CD4-positive, alpha-beta memory T cell (primary cell): ENCODE measurements at regions of chr17 and their contacts with region 1.

Region 1: DNA sequence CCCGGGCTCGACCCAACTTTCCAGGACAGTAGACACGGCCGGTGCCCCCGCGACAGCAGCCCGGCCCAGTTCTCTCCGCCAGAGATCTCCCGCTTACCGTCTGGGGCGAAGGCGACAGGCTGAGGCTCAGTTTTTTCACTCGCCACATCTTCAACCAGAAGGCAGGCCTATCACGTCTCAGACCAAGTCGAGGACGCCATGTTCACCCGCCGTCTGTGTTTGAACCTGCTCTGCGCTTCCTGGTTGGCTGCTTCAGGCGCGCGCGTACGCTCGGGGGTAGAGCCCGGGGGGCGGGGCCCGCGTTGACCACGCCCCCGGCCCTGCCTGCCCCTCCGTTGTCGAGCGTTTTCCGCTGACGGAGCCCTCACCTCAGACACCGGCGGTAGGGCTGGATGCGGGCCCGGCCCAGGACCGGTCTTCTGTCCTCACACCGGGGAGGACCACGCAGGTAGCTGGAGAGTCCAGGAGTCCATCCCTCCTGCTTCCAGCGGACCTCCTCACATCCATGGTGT is at the start of gene SPAG5:
- DNase-seq: peak; percentile 95 to 96 (median 96)
- H3K4me3 ChIP-seq: peak within 1 kb of the TSS; percentile 74 to 95
- H3K4me3 Mint-ChIP-seq: peak within 1 kb of the TSS; percentile 88 to 99 (median 96)
- H3K27ac ChIP-seq: peak within 1 kb of the TSS; percentile 100
- H3K27ac Mint-ChIP-seq: peak within 1 kb of the TSS; percentile 94 to 99 (median 99)
- H3K4me1 ChIP-seq: peaks cover 7% of the 10 kb centered on the region
- H3K4me1 Mint-ChIP-seq: peaks cover 13 to 27% (median 22%) of the 10 kb centered on the region in 4 donors
- H3K27me3 ChIP-seq: no peaks in the 10 kb centered on the region
- H3K27me3 Mint-ChIP-seq: no peaks in the 10 kb centered on the region
- total RNA-seq, gene SPAG5: 9.2 to 10.2 TPM

Region 2: DNA sequence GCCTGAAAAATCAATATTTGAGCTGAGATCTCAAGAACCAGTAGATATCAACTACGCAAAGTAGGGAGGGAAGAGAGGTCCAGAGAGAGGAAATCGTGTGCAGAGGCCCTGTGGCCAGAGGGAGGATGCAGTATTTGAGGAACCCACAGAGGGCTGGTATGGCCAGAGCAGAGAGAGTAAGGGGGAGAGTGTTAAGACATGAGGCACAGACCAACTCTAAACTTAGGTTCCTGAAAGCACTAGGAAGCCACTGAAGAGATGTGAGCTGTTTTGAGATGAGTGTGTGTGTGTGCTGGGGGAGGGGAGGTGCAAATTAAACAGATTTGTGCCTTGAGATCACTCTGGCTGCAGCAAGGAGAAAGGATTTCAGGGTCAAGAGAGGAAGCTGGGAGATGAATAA is 114.6 kb before region 1 on chr17:
- CTCF ChIA-PET with region 1: no interaction called
- POLR2A ChIA-PET with region 1: no interaction called
- intact Hi-C with region 1: no loop called
- DNase-seq: no peak
- H3K4me3 ChIP-seq: no peak overlapping the region
- H3K4me3 Mint-ChIP-seq: no peak overlapping the region
- H3K27ac ChIP-seq: no peak overlapping the region
- H3K27ac Mint-ChIP-seq: peak overlapping the region in 1 of 7 donors; percentile 4
- H3K4me1 ChIP-seq: no peaks in the 10 kb centered on the region
- H3K4me1 Mint-ChIP-seq: no peaks in the 10 kb centered on the region
- H3K27me3 ChIP-seq: no peaks in the 10 kb centered on the region
- H3K27me3 Mint-ChIP-seq: no peaks in the 10 kb centered on the region

Region 3: DNA sequence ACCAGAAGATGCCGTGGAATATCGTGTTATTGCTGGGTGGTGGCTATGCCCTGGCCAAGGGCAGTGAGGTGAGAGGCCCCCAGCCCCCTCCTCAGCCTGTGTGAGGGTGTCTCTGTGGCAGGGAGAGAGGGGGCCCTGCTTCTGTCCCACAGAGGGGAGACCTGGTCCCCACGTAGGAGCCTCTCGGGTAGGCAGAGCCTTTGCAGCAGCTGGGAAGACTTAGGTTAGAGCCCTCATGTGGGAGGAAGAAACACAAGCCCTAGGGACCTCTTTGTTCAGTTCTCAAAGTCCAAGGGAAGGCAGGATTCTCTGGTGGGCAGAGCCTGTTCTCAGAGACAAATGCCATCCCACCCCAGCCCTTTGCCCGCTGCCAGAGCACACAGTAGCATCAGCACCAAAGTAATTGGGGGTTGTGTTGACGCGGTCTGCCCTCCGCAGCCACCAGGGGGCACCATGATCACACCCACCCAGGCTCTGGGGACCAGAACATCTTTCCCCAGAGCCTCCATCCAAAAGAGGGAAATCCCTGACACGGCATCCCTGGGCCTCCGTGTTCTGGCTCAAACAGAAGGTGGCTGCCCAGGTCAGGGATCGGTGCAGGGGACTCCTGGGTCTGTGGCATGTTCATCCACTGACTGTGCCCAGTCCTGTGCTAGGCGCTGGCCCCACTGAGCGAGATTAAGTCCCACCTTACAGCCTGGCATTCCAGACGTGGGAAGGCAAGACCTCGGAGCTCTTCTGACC is 104.2 kb before region 1 on chr17:
- CTCF ChIA-PET with region 1: no interaction called
- POLR2A ChIA-PET with region 1: no interaction called
- intact Hi-C with region 1: loop called (anchors 1 kb)
- DNase-seq: peak; percentile 68 to 74 (median 71)
- H3K4me3 ChIP-seq: no peak overlapping the region
- H3K4me3 Mint-ChIP-seq: no peak overlapping the region
- H3K27ac ChIP-seq: no peak overlapping the region
- H3K27ac Mint-ChIP-seq: peak overlapping the region in 1 of 7 donors; percentile 46
- H3K4me1 ChIP-seq: no peaks in the 10 kb centered on the region
- H3K4me1 Mint-ChIP-seq: no peaks in the 10 kb centered on the region
- H3K27me3 ChIP-seq: no peaks in the 10 kb centered on the region
- H3K27me3 Mint-ChIP-seq: peaks cover 0 to 6% of the 10 kb centered on the region in 2 donors

Region 4: DNA sequence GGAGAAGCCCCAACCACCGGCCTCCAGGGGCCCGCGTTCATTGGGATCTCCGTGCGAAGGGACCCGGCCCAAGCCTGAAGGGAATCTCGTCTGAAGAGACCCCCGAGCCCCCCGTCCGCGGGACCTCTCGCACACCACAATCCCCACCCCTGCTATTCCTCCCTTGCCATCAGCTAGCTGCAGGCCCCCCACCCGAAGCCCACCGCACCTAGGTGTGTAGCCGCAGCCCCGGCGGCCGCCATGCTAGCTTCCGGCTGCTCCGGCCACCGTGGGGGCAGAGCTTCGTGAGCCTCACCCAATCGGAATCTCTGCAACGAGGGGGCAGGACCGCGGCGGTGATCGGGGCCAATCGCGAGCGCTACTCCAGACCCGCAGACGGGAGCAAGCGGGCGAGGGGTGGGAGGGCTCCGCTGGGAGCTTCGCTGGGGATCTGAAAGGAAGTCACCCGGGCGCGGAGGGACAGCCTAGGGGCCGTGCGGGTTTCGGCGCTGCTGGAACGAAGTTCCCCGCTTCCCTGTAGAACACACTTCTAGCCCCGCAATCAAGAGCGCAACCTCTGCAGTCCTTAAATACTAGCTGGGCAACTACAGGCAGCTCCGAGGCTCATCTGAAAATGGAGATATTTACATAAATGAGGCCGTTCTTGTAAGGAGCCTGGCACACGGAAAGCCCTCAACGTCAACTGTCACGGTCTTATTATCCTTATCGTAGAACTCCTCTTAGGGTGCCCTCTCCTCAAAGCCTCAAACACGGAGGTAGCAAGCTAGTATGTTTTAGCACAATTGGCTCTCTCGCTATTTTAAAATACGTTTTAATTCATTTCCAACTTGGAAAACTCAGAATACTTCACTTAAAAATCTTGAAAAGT is 27.4 kb before region 1 on chr17 and contains the start of gene PIGS:
- CTCF ChIA-PET with region 1: interaction called, 3 read pairs
- POLR2A ChIA-PET with region 1: interaction called, 169 read pairs
- intact Hi-C with region 1: loop called (anchors 1 kb)
- DNase-seq: peak; percentile 84 to 93 (median 87)
- H3K4me3 ChIP-seq: peak within 1 kb of the TSS; percentile 59 to 93
- H3K4me3 Mint-ChIP-seq: peak within 1 kb of the TSS; percentile 96 to 99 (median 97)
- H3K27ac ChIP-seq: peak within 1 kb of the TSS; percentile 79
- H3K27ac Mint-ChIP-seq: peak within 1 kb of the TSS; percentile 80 to 98 (median 97)
- H3K4me1 ChIP-seq: peaks cover 68% of the 10 kb centered on the region
- H3K4me1 Mint-ChIP-seq: peaks cover 41 to 82% (median 57%) of the 10 kb centered on the region in 4 donors
- H3K27me3 ChIP-seq: no peaks in the 10 kb centered on the region
- H3K27me3 Mint-ChIP-seq: no peaks in the 10 kb centered on the region
- total RNA-seq, gene PIGS: 57.9 to 58.2 TPM

Region 5: DNA sequence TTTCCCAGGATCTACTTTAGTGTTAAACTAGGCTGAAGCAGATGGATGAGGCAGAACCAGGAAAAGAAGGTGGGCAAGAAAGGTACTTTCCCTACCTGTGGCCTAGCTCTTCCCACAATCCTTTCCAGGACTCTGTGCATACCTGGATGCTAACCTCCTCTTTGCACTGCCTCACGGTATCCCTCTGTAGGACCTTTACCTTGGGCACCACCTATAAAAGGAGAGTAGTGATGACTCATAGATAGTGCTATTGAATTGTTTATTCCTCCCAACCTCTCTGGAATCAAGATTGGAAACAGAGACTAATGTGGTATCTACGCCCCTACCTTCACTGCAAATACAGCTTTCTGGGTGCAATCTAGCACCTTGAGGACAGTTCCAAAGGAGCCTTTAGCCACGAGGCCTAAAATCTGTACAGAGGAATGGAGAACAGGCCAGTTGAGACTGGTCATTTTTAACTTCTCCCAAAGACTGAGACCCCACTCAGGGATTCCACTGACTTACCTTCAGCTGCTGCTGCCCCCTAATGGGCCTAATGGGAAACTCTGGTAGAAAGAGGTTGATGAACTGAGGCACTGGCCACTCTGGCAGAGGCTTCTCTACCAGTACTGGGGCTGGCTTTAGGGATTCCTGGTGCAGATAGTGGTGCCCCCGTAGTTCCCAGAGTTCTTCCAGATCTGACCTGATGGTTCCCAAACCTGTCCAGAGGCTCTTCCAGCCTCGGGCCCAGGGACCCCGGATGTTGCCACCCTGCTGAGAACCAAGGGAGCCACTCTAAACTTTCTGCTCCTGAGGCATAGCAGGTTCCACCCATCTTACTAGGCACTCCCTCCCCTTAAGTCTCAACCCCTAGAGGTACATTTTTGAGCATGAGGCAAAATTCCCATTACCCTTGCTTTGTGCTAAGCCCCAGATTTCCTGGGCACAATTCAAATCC is 14.3 kb after region 1 on chr17:
- CTCF ChIA-PET with region 1: interaction called, 8 read pairs
- POLR2A ChIA-PET with region 1: interaction called, 12 read pairs
- intact Hi-C with region 1: no loop called
- DNase-seq: peak in 4 of 5 donors; percentile 19 to 40 (median 40)
- H3K4me3 ChIP-seq: no peak overlapping the region
- H3K4me3 Mint-ChIP-seq: no peak overlapping the region
- H3K27ac ChIP-seq: no peak overlapping the region
- H3K27ac Mint-ChIP-seq: peak overlapping the region in 6 of 7 donors; percentile 24 to 65 (median 36)
- H3K4me1 ChIP-seq: no peaks in the 10 kb centered on the region
- H3K4me1 Mint-ChIP-seq: peaks cover 4 to 13% (median 10%) of the 10 kb centered on the region in 4 donors
- H3K27me3 ChIP-seq: no peaks in the 10 kb centered on the region
- H3K27me3 Mint-ChIP-seq: no peaks in the 10 kb centered on the region

Region 6: GRCh38 chr17:28661635-28662537 is 63.0 kb after region 1 on chr17 and contains the starts of genes SDF2 and SUPT6H:
- CTCF ChIA-PET with region 1: no interaction called
- POLR2A ChIA-PET with region 1: interaction called, 11 read pairs
- intact Hi-C with region 1: no loop called
- DNase-seq: peak; percentile 94 to 96 (median 95)
- H3K4me3 ChIP-seq: peak within 1 kb of the TSS; percentile 92 to 99
- H3K4me3 Mint-ChIP-seq: peak within 1 kb of the TSS; percentile 99 to 100 (median 100)
- H3K27ac ChIP-seq: peak within 1 kb of the TSS; percentile 99
- H3K27ac Mint-ChIP-seq: peak within 1 kb of the TSS; percentile 97 to 100 (median 100)
- H3K4me1 ChIP-seq: peaks cover 51% of the 10 kb centered on the region
- H3K4me1 Mint-ChIP-seq: peaks cover 42 to 68% (median 56%) of the 10 kb centered on the region in 4 donors
- H3K27me3 ChIP-seq: no peaks in the 10 kb centered on the region
- H3K27me3 Mint-ChIP-seq: no peaks in the 10 kb centered on the region
- total RNA-seq, gene SDF2: 41.5 to 48.1 TPM
- total RNA-seq, gene SUPT6H: 96.5 to 102 TPM